MCF 10A (cell line): ENCODE measurements at regions of chr10 and their contacts with region 1.

Region 1: GRCh38 chr10:58414270-58415041 is 29.2 kb downstream of the TFAM start:
- DNase-seq: peak; percentile 79
- H3K4me3 Mint-ChIP-seq: no peak overlapping the region
- H3K27ac Mint-ChIP-seq: no peak overlapping the region
- H3K4me1 Mint-ChIP-seq: peaks cover 16% of the 10 kb centered on the region
- H3K27me3 Mint-ChIP-seq: no peaks in the 10 kb centered on the region
- CTCF ChIP-seq: peak; percentile 67

Region 2: DNA sequence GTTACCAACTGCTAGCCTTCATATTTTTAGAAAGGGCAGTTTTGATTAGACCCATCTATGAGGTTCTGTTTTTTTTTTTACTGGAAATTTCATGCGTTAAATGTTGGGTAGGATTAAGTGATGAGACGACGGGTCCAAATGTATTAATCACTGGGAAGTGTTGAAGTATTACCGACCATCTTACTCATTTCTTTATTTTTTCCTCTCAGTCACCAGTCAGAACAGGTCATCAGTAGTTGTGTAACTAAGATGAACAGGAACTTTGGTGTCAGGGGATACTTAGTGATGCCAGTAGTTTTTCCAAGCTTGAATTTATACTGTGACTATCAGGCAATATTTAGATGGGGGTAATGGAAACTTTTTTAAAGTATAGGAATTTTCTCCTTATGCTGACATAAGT is 15.0 kb before region 1 on chr10:
- CTCF ChIA-PET with region 1: interaction called, 59 read pairs
- POLR2A ChIA-PET with region 1: interaction called, 6 read pairs
- intact Hi-C with region 1: no loop called
- DNase-seq: peak; percentile 46
- H3K4me3 Mint-ChIP-seq: no peak overlapping the region
- H3K27ac Mint-ChIP-seq: no peak overlapping the region
- H3K4me1 Mint-ChIP-seq: no peaks in the 10 kb centered on the region
- H3K27me3 Mint-ChIP-seq: no peaks in the 10 kb centered on the region
- CTCF ChIP-seq: no peak

Region 3: GRCh38 chr10:58518775-58519174 is 104.3 kb after region 1 on chr10:
- CTCF ChIA-PET with region 1: interaction called, 10 read pairs
- POLR2A ChIA-PET with region 1: interaction called, 16 read pairs
- intact Hi-C with region 1: loop called (anchors 2 kb)
- DNase-seq: no peak
- H3K4me3 Mint-ChIP-seq: no peak overlapping the region
- H3K27ac Mint-ChIP-seq: no peak overlapping the region
- H3K4me1 Mint-ChIP-seq: peaks cover 37% of the 10 kb centered on the region
- H3K27me3 Mint-ChIP-seq: no peaks in the 10 kb centered on the region
- CTCF ChIP-seq: no peak

Region 4: GRCh38 chr10:58775960-58776567 is 361.6 kb after region 1 on chr10:
- CTCF ChIA-PET with region 1: interaction called, 13 read pairs
- POLR2A ChIA-PET with region 1: interaction called, 4 read pairs
- intact Hi-C with region 1: no loop called
- DNase-seq: peak; percentile 50
- H3K4me3 Mint-ChIP-seq: no peak overlapping the region
- H3K27ac Mint-ChIP-seq: peak overlapping the region; percentile 10
- H3K4me1 Mint-ChIP-seq: peaks cover 32% of the 10 kb centered on the region
- H3K27me3 Mint-ChIP-seq: no peaks in the 10 kb centered on the region
- CTCF ChIP-seq: no peak

Region 5: DNA sequence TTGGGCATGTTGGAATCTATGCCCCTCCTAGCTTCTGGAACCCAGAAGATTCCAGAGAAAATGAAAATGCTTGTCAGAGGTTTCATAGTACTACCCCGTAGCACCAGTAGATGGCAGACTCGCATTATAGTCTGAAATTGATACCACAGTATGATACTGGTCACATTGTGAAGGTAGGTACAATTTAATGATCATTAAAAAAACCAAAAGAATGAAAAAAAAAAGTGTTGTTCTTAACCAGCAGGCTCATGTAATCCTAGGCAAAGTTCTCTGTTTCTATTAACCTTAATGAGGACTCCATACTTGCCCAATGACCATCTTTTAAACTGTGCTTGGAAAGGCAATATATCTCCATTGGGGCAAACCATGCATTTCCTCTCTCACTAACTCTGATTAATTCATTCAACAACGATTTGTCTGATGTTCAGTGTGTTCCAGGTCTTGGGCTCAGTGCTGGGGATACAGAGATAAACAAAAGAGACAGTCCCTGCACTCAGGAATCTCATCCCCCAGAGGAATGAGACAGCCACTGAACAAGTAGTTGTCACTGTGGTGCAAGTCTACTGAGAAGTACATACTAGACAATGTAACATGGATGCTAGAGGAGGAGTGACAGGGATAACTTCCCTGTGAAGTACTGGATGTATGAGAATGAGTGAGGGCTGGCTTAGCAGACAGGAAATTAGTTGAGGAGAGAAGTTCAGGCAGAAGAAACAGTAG is 538.5 kb after region 1 on chr10:
- CTCF ChIA-PET with region 1: interaction called, 6 read pairs
- POLR2A ChIA-PET with region 1: no interaction called
- intact Hi-C with region 1: loop called (anchors 5 kb)
- DNase-seq: peak; percentile 59
- H3K4me3 Mint-ChIP-seq: no peak overlapping the region
- H3K27ac Mint-ChIP-seq: no peak overlapping the region
- H3K4me1 Mint-ChIP-seq: peaks cover 6% of the 10 kb centered on the region
- H3K27me3 Mint-ChIP-seq: peaks cover 9% of the 10 kb centered on the region
- CTCF ChIP-seq: peak; percentile 70

Region 6: DNA sequence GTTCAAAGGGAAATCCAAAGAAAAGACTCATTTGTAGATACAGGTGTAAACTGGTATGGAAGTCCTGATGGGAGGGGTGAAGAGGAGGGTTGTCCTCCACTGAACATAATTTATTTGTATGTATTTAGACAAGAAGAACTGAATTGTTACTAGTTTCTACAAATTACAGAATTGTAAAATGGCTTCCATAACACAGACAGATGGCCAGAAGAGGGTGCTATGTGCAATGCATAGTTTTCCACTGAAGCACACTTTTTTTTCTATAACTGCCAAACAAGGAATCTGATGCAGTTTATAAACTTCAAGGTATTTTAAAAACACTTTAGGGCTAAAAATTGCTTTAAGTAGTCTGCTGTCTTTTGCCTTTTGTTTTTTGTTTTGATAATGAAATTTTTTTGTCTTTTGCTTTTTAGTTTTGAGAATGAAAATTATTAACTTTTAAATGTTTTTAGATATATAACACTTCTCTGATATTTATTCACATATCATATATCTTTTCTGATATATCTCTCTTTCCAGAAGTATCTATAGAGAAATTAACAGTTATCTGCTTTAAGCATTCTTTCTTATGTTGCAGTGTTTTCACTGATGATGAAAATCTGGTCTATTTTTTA is 820.5 kb after region 1 on chr10:
- CTCF ChIA-PET with region 1: no interaction called
- POLR2A ChIA-PET with region 1: no interaction called
- intact Hi-C with region 1: loop called (anchors 2 kb)
- DNase-seq: peak; percentile 39
- H3K4me3 Mint-ChIP-seq: no peak overlapping the region
- H3K27ac Mint-ChIP-seq: no peak overlapping the region
- H3K4me1 Mint-ChIP-seq: no peaks in the 10 kb centered on the region
- H3K27me3 Mint-ChIP-seq: peaks cover 74% of the 10 kb centered on the region
- CTCF ChIP-seq: peak; percentile 42

Region 7: DNA sequence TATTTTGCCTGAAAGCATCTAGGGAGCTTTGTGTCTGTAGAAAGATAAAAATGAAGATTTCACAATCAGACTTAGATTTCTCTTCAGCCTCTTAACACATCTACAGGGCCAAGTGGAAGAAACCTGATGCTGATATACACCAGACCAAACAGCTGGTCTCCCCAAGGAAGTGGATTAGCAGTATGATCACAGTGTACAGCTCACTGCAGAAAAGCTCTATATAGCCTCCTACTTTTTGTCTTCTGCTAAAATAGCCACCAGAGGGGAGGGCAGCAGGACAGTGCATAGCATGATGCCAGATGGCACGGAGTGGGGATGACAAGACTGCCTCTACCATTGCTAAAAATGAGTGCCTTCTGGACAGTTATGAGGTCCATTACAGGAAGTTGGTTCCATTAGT is 931.9 kb after region 1 on chr10:
- CTCF ChIA-PET with region 1: no interaction called
- POLR2A ChIA-PET with region 1: no interaction called
- intact Hi-C with region 1: no loop called
- DNase-seq: no peak
- H3K4me3 Mint-ChIP-seq: no peak overlapping the region
- H3K27ac Mint-ChIP-seq: no peak overlapping the region
- H3K4me1 Mint-ChIP-seq: no peaks in the 10 kb centered on the region
- H3K27me3 Mint-ChIP-seq: no peaks in the 10 kb centered on the region
- CTCF ChIP-seq: no peak